Dorsolateral prefrontal cortex (tissue), 120 donors: ENCODE measurements at regions of chr13 and their contacts with region 1.

Region 1: GRCh38 chr13:36999054-36999714 is at the start of gene ALG5:
- DNase-seq: peak; percentile 80 to 94 (median 87)
- H3K4me3 ChIP-seq: peak within 1 kb of the TSS; percentile 61 to 98 (median 91)
- H3K27ac ChIP-seq: peak within 1 kb of the TSS; percentile 90 to 100 (median 98)
- H3K27me3 ChIP-seq: no peaks in the 10 kb centered on the region
- CTCF ChIP-seq: peak; percentile 82 to 100 (median 97)
- total RNA-seq, gene ALG5: 8.5 to 26.6 (median 16.0) TPM

Region 2: GRCh38 chr13:36297366-36298338 is 701.5 kb before region 1 on chr13 and contains the start of gene CCDC169:
- intact Hi-C with region 1: loop called in 1 of 2 experiments (anchors 10 kb)
- DNase-seq: peak; percentile 28 to 84 (median 62)
- H3K4me3 ChIP-seq: peak within 1 kb of the TSS; percentile 51 to 92 (median 74)
- H3K27ac ChIP-seq: peak within 1 kb of the TSS in 16 of 59 donors; percentile 1 to 71 (median 24)
- H3K27me3 ChIP-seq: no peaks in the 10 kb centered on the region
- CTCF ChIP-seq: peak in 3 of 56 donors; percentile 5 to 14 (median 9)
- total RNA-seq, gene CCDC169: 0.84 to 8.8 (median 3.5) TPM

Region 3: DNA sequence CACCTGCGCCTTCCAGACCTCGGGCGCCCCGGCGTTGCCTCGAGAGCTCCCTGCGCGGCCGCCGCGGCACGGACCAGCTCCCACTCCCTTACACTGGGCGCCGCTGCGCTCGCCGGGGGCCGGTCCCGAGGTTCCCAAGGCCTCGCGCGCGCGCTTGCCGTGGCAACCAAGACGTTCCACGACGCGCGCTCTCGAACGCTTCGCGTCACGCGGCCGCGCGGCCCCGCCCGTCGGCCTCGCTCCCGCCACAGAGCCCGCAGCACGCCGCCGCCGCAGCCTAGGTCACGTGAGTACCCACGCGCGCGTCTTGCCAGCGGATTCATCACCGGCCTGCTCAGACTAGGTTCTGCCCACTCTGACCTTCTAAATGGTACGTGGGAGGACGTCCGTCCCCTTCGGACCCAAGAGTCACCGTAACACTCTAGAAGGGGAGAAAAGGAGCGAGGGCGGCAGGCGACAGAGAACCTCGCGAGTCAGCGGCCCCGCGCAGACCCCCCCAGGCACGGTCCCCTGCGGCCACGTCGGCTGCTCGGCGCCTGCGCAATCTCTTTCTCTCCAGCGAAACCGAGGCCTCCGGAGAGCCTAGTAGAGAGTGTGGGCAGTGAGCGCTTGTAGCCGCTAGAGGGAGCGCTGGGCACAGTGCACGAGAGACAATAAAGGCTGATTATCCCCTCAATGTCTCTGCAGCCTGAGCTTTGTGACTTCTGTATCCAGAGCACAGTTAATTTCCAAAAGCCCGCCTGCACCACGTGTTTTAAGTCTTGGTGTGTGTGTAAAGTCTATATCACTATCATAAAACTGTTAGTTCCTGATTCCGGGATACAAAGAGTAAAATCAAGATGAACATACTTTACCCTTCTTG is 652.7 kb before region 1 on chr13 and contains the start of gene SPART:
- intact Hi-C with region 1: loop called in 1 of 2 experiments (anchors 5 kb)
- DNase-seq: peak; percentile 91 to 97 (median 94)
- H3K4me3 ChIP-seq: peak within 1 kb of the TSS; percentile 53 to 94 (median 82)
- H3K27ac ChIP-seq: peak within 1 kb of the TSS; percentile 90 to 100 (median 99)
- H3K27me3 ChIP-seq: no peaks in the 10 kb centered on the region
- CTCF ChIP-seq: peak in 55 of 56 donors; percentile 90 to 99 (median 98)
- total RNA-seq, gene SPART: 62.9 to 138 (median 86.2) TPM

Region 4: GRCh38 chr13:36919833-36920615 is 79.2 kb before region 1 on chr13 and contains the start of gene SMAD9:
- intact Hi-C with region 1: loop called in 1 of 2 experiments (anchors 5 kb)
- DNase-seq: peak; percentile 10 to 84 (median 62)
- H3K4me3 ChIP-seq: peak within 1 kb of the TSS; percentile 36 to 82 (median 66)
- H3K27ac ChIP-seq: peak within 1 kb of the TSS in 53 of 59 donors; percentile 20 to 87 (median 69)
- H3K27me3 ChIP-seq: no peaks in the 10 kb centered on the region
- CTCF ChIP-seq: no peak
- total RNA-seq, gene SMAD9: 6.2 to 41.0 (median 17.2) TPM

Region 5: DNA sequence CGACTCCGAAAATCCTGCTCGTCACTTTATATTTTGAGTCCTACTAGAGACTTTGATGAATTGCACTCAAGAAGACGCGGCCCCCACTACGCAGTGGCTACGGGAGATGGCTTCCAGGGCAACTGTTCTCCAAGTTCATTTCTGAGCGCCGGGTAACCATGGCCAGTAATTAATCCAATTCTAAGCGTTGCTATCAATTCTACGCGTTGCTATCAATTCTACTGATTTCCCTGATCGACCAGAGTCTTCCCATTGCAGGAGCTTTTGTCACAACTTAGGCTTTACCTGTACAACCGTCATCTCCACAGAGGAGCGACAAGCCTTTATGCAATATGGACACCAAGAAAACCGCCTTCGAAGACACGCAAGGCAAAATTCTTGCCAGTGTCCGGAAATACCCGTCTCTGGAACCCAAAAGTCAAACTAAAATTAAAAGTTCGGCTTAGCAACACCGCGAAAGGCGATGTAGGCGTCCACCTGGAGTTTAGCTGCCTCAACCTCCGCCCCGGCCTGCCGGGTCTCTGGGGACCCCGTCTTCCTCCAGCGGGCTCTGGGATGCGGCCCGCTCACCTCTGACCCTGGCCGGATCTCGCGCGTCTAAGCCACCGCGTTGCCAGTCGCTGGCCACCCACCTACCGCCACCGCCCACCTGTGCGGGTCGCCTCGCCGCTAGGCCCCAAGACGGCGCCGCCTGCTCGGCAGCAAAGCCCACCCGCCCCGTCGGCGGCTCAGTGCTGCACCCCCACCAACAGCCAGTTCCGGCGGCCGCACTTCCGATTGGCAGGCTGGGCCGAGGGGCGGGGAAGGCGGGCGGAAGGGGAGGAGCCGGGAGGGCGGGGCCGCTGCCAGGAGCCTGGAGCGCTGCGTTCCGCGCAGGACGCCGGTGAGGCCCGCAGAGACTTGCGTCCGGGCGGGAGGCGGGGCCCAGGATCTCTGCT is 60.0 kb after region 1 on chr13 and contains the start of gene SUPT20H:
- intact Hi-C with region 1: loop called in 1 of 2 experiments (anchors 5 kb)
- DNase-seq: peak; percentile 80 to 95 (median 90)
- H3K4me3 ChIP-seq: peak within 1 kb of the TSS; percentile 59 to 100 (median 96)
- H3K27ac ChIP-seq: peak within 1 kb of the TSS in 58 of 59 donors; percentile 25 to 93 (median 84)
- H3K27me3 ChIP-seq: no peaks in the 10 kb centered on the region
- CTCF ChIP-seq: peak in 33 of 56 donors; percentile 4 to 63 (median 28)
- total RNA-seq, gene SUPT20H: 32.0 to 82.1 (median 56.3) TPM